ENCODE measurements at regions of chr2 and their contacts with region 1.

Region 1: DNA sequence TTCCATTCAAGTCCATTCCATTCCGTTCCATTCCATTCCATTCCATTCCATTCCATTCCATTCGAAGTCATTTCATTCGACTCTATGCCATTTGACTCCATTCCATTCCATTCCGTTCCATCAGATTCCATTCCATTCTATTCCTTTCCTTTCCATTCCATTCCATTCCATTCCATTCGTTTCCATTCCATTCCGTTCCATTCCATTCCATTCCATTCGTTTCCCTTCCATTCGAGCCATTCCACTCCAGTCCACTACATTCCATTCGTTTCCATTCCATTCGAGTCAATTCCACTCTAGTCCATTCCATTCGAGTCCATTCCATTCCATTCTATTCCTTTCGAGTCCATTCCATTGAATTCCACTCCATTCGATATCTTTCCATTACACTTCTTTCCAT is 1120.5 kb downstream of the RPIA start:
- DNase-seq: no peak
- H3K4me3 ChIP-seq: no peak overlapping the region
- H3K27ac ChIP-seq: no peak overlapping the region
- H3K4me1 ChIP-seq: no peaks in the 10 kb centered on the region
- H3K27me3 ChIP-seq: no peaks in the 10 kb centered on the region
- CTCF ChIP-seq: no peak
- EP300 ChIP-seq: no peak
- POLR2A ChIP-seq: no peak

Region 2: GRCh38 chr2:89775885-89776682 is 35.8 kb before region 1 on chr2:
- intact Hi-C with region 1: loop called in 1 of 4 experiments (anchors 5 kb)
- DNase-seq: no peak
- H3K4me3 ChIP-seq: no peak overlapping the region
- H3K27ac ChIP-seq: no peak overlapping the region
- H3K4me1 ChIP-seq: no peaks in the 10 kb centered on the region
- H3K27me3 ChIP-seq: no peaks in the 10 kb centered on the region
- CTCF ChIP-seq: no peak
- EP300 ChIP-seq: no peak
- POLR2A ChIP-seq: no peak

Region 3: GRCh38 chr2:89833116-89833779 is 21.3 kb after region 1 on chr2:
- intact Hi-C with region 1: no loop called
- DNase-seq: no peak
- H3K4me3 ChIP-seq: no peak overlapping the region
- H3K27ac ChIP-seq: no peak overlapping the region
- H3K4me1 ChIP-seq: no peaks in the 10 kb centered on the region
- H3K27me3 ChIP-seq: no peaks in the 10 kb centered on the region
- CTCF ChIP-seq: no peak
- EP300 ChIP-seq: no peak
- POLR2A ChIP-seq: no peak

Region 4: DNA sequence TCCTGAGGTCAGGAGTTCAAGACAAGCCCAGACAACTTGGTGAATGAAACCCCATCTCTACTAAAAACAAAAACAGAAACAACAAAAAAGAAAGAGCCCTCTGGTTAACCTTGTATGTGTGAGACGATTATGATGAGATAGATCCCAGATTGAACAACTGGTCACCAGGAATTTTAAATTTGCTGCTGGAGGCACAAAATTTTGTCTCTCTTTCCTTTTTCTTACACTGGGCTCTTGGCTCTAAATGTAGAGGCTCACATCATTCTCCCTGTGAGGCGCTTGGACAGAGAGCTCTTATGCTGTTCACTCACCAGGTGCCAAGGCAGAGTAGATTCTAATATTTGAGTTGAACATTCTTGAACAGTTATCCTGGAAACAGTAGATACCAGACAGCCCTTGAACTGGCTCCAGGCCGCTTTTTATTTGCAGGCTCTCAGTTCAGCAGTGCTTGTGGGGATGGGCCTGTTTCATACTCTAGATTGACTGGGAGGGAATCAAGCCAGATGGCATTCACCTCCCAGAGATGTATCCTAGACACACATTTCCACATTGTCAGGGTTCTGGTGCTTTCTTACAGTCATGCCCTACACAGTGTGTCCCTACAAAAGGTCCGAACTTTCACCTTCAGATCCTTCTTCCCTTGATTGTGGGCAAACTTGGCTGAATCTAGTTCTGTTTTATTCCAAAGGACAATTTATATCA is 39.1 kb after region 1 on chr2:
- intact Hi-C with region 1: no loop called
- DNase-seq: no peak
- H3K4me3 ChIP-seq: no peak overlapping the region
- H3K27ac ChIP-seq: no peak overlapping the region
- H3K4me1 ChIP-seq: no peaks in the 10 kb centered on the region
- H3K27me3 ChIP-seq: no peaks in the 10 kb centered on the region
- CTCF ChIP-seq: no peak
- EP300 ChIP-seq: no peak
- POLR2A ChIP-seq: no peak